HepG2 (cell line): ENCODE measurements at regions of chr17 and their contacts with region 1.

Region 1: GRCh38 chr17:29148790-29149430 is 31.3 kb downstream of the MYO18A start:
- DNase-seq: peak; percentile 87
- ATAC-seq: peak; percentile 93
- H3K4me3 ChIP-seq: peak overlapping the region; percentile 25 to 55 (median 43); a peak in 5 of 6 replicates
- H3K27ac ChIP-seq: peak overlapping the region; percentile 64
- H3K4me1 ChIP-seq: peaks cover 81% of the 10 kb centered on the region
- H3K27me3 ChIP-seq: no peaks in the 10 kb centered on the region
- CTCF ChIP-seq: peak; percentile 98
- EP300 ChIP-seq: peak in 1 of 2 experiments; percentile 27; a peak in 1 of 4 replicates
- POLR2A ChIP-seq: peak in 1 of 2 experiments; percentile 33; a peak in 1 of 4 replicates
- RAD21 ChIP-seq: peak; percentile 100

Region 2: DNA sequence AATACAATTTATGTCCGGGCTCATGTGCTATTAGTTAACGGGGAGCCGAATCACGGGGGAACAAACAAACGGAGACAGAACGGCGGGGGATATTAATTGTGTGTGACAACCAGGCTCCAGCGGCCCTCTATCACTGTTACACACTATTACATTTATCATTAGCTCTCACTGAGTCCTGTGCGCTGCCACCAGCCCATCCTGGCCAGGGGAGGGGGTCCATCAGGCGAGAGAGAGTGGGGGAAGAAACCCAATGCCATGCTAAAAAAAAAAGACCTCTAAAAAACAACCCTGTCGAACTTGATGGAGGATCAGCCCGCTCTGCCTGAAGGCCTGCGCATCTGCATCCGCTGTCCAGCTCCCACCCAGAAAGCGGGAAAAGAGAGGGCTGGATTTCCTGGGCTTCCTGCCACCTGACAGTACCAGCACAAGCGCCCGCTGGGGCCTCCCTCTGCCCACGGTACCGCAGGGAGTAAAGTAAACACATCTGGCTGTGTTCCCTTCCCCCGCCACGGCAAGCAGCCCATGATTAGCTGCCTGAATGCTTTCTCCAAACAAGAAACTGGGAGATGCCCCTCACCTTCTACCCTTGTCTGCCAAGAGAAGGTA is 64.3 kb before region 1 on chr17:
- CTCF ChIA-PET with region 1: no interaction called
- POLR2A ChIA-PET with region 1: no interaction called
- in situ Hi-C with region 1: no loop called
- intact Hi-C with region 1: loop called (anchors 10 kb)
- DNase-seq: no peak
- ATAC-seq: no peak
- H3K4me3 ChIP-seq: no peak overlapping the region
- H3K27ac ChIP-seq: no peak overlapping the region
- H3K4me1 ChIP-seq: no peaks in the 10 kb centered on the region
- H3K27me3 ChIP-seq: no peaks in the 10 kb centered on the region
- CTCF ChIP-seq: no peak
- EP300 ChIP-seq: no peak
- POLR2A ChIP-seq: no peak
- RAD21 ChIP-seq: no peak

Region 3: GRCh38 chr17:29111816-29112499 is 37.0 kb before region 1 on chr17:
- CTCF ChIA-PET with region 1: no interaction called
- POLR2A ChIA-PET with region 1: no interaction called
- in situ Hi-C with region 1: no loop called
- intact Hi-C with region 1: no loop called
- DNase-seq: peak; percentile 41
- ATAC-seq: peak; percentile 74
- H3K4me3 ChIP-seq: no peak overlapping the region
- H3K27ac ChIP-seq: no peak overlapping the region
- H3K4me1 ChIP-seq: peaks cover 16% of the 10 kb centered on the region
- H3K27me3 ChIP-seq: no peaks in the 10 kb centered on the region
- CTCF ChIP-seq: peak; percentile 95
- EP300 ChIP-seq: no peak
- POLR2A ChIP-seq: no peak
- RAD21 ChIP-seq: peak; percentile 80

Region 4: DNA sequence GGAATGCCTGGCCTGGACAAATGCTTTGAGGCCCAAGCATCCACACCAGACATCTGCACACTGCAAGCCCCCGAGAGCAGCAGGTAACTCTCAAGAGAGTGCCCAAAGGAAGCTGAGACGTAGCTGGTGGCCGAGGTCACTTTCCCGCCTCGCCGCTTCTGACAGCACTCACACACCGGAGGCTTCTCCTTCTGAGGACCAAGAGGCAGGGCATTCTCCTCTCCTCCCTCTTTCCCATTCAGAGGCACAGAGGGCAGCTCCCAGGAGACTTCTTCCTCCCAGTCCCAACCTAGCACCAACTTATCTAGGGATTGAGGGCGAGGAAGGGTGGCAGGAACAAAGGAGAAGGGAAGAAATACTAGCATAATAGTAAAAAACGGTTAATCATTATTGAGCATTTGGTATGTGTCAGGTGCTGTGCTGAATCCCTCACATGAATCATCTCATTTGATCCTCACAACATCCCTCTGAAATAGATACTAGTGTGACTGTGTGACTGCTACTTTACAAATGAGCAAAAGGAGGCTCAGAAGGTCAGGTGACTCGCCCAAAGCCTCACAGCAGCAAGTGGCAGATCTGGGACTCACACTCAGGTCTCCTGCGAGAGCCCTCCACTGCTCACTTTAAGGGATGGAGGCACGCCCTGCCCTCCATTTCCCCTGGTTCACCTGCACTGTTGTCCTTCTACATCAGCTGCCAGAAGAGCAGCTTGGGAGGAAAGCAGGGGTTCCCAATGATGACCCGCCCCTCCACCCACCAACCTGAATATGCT is 10.5 kb before region 1 on chr17:
- CTCF ChIA-PET with region 1: no interaction called
- POLR2A ChIA-PET with region 1: no interaction called
- in situ Hi-C with region 1: no loop called
- intact Hi-C with region 1: no loop called
- DNase-seq: no peak
- ATAC-seq: no peak
- H3K4me3 ChIP-seq: no peak overlapping the region
- H3K27ac ChIP-seq: no peak overlapping the region
- H3K4me1 ChIP-seq: peaks cover 30% of the 10 kb centered on the region
- H3K27me3 ChIP-seq: no peaks in the 10 kb centered on the region
- CTCF ChIP-seq: no peak
- EP300 ChIP-seq: no peak
- POLR2A ChIP-seq: no peak
- RAD21 ChIP-seq: no peak

Region 5: DNA sequence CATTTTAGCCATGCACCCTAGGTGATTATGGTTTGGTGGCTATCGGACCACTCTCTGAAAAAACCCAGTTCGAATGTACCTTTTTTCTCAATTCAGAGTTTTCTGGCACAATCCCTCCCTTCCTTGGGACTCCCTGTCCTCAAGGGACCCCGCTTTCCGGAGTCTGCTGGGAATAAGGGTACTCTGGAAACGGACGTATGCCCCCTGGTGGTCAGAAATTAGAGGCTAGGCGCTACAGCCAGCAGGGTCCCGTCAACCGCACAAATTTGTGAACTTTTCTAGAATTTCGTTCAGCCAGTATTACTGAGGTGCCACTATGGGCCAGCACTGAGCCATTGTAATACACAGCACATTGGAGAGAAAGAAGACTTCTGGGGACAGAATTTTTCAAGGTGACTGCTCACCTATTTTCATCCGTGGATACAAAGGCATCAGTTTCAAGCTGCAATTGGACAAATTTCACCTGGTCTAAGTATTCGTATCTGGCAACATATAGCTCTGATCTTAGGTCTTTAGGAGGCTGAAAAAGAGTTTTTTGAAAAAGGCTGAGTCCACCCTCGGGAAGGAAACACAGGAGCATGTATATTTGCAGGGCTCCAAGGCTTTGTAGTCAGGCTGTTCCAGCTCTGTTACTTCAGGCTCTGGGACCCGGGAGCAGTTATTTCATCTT is 70.6 kb after region 1 on chr17:
- CTCF ChIA-PET with region 1: interaction called, 44 read pairs
- POLR2A ChIA-PET with region 1: interaction called, 9 read pairs
- in situ Hi-C with region 1: loop called (anchors 5 kb)
- intact Hi-C with region 1: loop called (anchors 1 kb)
- DNase-seq: peak; percentile 77
- ATAC-seq: peak; percentile 97
- H3K4me3 ChIP-seq: no peak overlapping the region
- H3K27ac ChIP-seq: no peak overlapping the region
- H3K4me1 ChIP-seq: peaks cover 10% of the 10 kb centered on the region
- H3K27me3 ChIP-seq: peaks cover 1 to 8% of the 10 kb centered on the region in 2 experiments; a peak in 3 of 5 replicates
- CTCF ChIP-seq: peak; percentile 91
- EP300 ChIP-seq: no peak
- POLR2A ChIP-seq: no peak
- RAD21 ChIP-seq: peak; percentile 74